ENCODE measurements at regions of chr4 and their contacts with region 1.

Region 1: DNA sequence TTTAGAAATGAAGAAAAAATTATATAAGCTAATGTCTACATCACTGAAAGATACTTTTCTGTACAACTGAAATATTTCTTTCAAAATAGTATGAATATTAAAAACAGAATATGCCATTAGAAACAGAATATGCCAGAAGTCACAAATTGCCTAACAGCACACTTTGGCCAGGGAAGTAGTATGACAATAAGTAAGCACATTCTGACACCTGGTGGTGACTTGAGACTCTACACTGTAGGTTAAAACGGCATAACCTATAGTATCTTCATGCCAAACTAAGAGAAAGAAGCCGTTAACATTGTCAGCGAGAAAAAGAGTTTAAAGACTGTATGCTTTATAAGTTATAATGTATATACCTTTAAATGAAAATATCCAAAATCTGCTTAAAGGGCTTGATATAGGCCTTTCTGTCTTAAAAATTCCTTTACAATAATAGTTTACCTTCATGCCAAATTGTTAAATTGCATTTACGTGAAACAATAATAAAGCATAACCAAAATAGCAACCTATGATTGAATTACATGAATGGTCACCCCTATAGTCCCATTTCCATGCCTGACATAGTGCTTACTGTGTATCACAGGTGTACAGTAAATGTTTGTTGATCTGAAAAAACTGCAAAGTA is 32.8 kb downstream of the FAM13A start:
- DNase-seq: peak; percentile 29
- H3K4me3 ChIP-seq: no peak overlapping the region
- CTCF ChIP-seq: peak; percentile 59

Region 2: DNA sequence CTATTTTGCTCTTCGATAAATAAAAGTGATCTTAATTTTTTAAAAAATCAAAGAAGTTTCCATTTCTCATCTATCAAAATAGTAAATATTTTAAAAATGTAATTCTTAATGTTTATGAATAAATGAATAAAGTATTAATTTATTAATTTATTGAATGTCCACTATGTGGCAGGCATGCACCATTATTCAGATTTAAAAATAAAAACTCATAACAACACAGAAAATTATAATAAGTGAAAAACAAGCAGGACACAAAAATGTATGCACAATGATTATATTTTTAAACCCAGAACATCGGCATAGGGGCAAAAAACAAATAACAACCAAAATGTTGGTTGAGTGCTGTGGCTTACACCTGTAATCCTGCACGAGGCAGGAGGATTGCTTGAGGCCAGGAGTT is 495.3 kb before region 1 on chr4:
- CTCF ChIA-PET with region 1: interaction called, 42 read pairs
- POLR2A ChIA-PET with region 1: no interaction called
- DNase-seq: no peak
- H3K4me3 ChIP-seq: no peak overlapping the region
- CTCF ChIP-seq: no peak

Region 3: GRCh38 chr4:88706574-88706973 is 317.6 kb before region 1 on chr4:
- CTCF ChIA-PET with region 1: interaction called, 98 read pairs
- POLR2A ChIA-PET with region 1: no interaction called
- DNase-seq: no peak
- H3K4me3 ChIP-seq: no peak overlapping the region
- CTCF ChIP-seq: peak; percentile 60

Region 4: GRCh38 chr4:88809576-88810219 is 214.5 kb before region 1 on chr4:
- CTCF ChIA-PET with region 1: interaction called, 299 read pairs
- POLR2A ChIA-PET with region 1: no interaction called
- DNase-seq: no peak
- H3K4me3 ChIP-seq: no peak overlapping the region
- CTCF ChIP-seq: no peak

Region 5: GRCh38 chr4:88928852-88929251 is 95.3 kb before region 1 on chr4:
- CTCF ChIA-PET with region 1: no interaction called
- POLR2A ChIA-PET with region 1: no interaction called
- DNase-seq: no peak
- H3K4me3 ChIP-seq: no peak overlapping the region
- CTCF ChIP-seq: no peak

Region 6: GRCh38 chr4:89000844-89001360 is 23.3 kb before region 1 on chr4:
- CTCF ChIA-PET with region 1: interaction called, 15 read pairs
- POLR2A ChIA-PET with region 1: no interaction called
- DNase-seq: no peak
- H3K4me3 ChIP-seq: no peak overlapping the region
- CTCF ChIP-seq: no peak